ENCODE measurements at regions of chr19 and their contacts with region 1.

Region 1: GRCh38 chr19:34171877-34172660 is at the start of gene LSM14A:
- DNase-seq: peak; percentile 92 to 96 (median 94)
- ATAC-seq: peak; percentile 87 to 91
- H3K4me3 Mint-ChIP-seq: peak within 1 kb of the TSS; percentile 82 to 99 (median 97)
- H3K27ac Mint-ChIP-seq: peak within 1 kb of the TSS; percentile 90 to 100 (median 98)
- H3K4me1 Mint-ChIP-seq: peaks cover 11 to 50% (median 43%) of the 10 kb centered on the region in 4 donors
- H3K27me3 Mint-ChIP-seq: no peaks in the 10 kb centered on the region
- polyA plus RNA-seq, gene LSM14A: 163 to 193 (median 172) TPM

Region 2: GRCh38 chr19:34088303-34088702 is 83.8 kb before region 1 on chr19:
- POLR2A ChIA-PET with region 1: no interaction called
- DNase-seq: no peak
- ATAC-seq: no peak
- H3K4me3 Mint-ChIP-seq: no peak overlapping the region
- H3K27ac Mint-ChIP-seq: no peak overlapping the region
- H3K4me1 Mint-ChIP-seq: peaks cover 0 to 2% (median 0%) of the 10 kb centered on the region in 4 donors
- H3K27me3 Mint-ChIP-seq: peaks cover 8 to 31% (median 21%) of the 10 kb centered on the region in 5 donors

Region 3: DNA sequence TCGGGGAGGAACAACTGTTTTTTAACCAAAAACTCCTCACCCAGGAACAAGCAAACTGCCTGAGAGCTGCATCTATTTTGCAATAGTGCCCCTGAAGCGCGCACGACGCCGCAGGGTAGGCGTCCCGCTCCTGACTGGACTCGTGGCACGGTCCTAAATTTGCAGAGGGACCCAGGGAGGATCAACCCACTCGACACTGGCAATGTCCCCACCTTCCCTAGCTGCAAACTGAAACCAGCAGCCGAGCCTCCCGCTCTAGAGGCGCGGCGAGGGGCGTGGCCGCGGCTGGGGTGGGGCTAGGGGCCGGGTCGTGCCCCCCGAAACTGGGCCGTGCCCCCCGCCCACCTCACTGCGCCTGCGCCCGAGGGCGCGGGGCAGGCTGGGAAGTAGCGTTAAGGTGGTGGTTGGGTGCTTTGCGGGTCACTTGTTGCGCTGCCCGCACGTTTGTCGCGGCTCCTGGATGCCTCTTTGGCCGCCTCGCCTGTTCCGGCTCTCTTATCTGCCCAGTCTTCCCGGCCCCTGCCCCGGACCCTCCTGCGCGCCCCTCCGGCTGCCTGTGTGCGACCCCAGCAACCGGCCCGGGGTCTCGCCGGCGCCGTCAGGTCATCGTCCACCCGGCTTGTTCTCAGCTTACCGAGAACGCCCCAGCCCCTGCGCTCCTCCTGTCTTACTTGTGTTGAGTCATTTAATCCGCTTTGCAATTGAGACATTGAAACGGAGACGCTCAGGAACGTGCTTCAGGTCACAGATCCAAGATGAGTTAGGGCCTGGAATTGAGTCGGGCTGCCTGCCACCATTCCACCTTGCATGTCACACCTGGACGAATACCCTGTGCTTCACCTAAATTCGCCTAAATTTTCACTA is 37.6 kb before region 1 on chr19:
- POLR2A ChIA-PET with region 1: interaction called, 25 read pairs
- DNase-seq: peak; percentile 88 to 96 (median 94)
- ATAC-seq: peak; percentile 96 to 97
- H3K4me3 Mint-ChIP-seq: peak overlapping the region; percentile 85 to 97 (median 94)
- H3K27ac Mint-ChIP-seq: peak overlapping the region in 9 of 10 donors; percentile 91 to 96 (median 96)
- H3K4me1 Mint-ChIP-seq: peaks cover 0 to 12% (median 5%) of the 10 kb centered on the region in 4 donors
- H3K27me3 Mint-ChIP-seq: no peaks in the 10 kb centered on the region

Region 4: DNA sequence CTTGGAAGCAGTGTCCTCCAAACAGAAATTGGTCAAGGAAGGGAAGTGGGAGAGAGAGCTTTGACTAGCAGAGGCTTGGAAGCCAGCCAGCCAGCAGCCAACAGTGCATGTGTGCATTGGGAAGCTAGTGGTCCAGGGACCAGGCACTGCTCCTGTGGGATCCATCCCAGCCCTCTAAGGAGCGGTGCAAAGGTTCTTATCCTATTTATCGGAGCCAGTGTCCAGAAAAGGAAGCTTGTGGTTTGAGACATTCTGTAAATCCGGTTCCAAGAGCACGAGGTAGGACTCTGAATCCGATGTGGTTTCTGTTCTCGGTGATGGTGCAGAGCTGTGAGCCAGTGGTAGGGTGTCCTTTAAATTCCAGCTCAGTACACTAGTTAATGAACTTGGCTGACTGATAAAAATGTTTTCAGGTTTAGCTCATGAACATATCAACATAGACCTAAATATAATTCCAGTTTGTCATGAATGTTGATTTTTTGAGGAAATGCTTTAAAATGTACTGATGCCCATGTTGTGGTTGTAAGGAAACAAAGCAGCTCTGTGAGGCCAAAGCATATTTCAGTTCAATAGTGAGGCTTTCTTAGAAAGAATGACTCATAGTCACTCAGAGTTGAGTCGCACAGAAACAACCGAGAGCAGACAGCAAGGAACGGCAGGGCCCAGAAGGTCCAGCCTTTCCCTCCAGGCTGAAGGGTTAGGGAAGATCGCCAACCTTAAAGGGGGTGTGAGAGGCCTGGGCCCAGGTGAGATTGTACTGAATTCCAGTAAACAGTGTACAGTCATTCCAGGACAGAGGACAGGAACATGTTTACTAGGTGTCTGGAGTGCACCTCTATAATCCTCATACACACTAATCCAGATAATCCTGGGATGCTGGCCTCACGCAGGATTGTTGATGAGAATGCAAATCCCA is 60.8 kb after region 1 on chr19:
- POLR2A ChIA-PET with region 1: interaction called, 10 read pairs
- DNase-seq: no peak
- ATAC-seq: peak; percentile 29 to 46
- H3K4me3 Mint-ChIP-seq: peak overlapping the region in 2 of 10 donors; percentile 41 to 45
- H3K27ac Mint-ChIP-seq: peak overlapping the region; percentile 13 to 90 (median 76)
- H3K4me1 Mint-ChIP-seq: peaks cover 10 to 22% (median 20%) of the 10 kb centered on the region in 4 donors
- H3K27me3 Mint-ChIP-seq: no peaks in the 10 kb centered on the region

Region 5: GRCh38 chr19:34269968-34270621 is 98.0 kb after region 1 on chr19:
- POLR2A ChIA-PET with region 1: interaction called, 14 read pairs
- DNase-seq: peak; percentile 41 to 90 (median 78)
- ATAC-seq: peak; percentile 89 to 90
- H3K4me3 Mint-ChIP-seq: peak overlapping the region; percentile 68 to 90 (median 80)
- H3K27ac Mint-ChIP-seq: peak overlapping the region; percentile 86 to 99 (median 96)
- H3K4me1 Mint-ChIP-seq: peaks cover 50 to 91% (median 80%) of the 10 kb centered on the region in 4 donors
- H3K27me3 Mint-ChIP-seq: no peaks in the 10 kb centered on the region

Region 6: GRCh38 chr19:34364830-34365462 is 192.9 kb after region 1 on chr19 and contains the start of gene GPI:
- POLR2A ChIA-PET with region 1: interaction called, 12 read pairs
- DNase-seq: peak; percentile 51 to 76 (median 65)
- ATAC-seq: peak; percentile 91 to 92
- H3K4me3 Mint-ChIP-seq: peak within 1 kb of the TSS; percentile 92 to 98 (median 95)
- H3K27ac Mint-ChIP-seq: peak within 1 kb of the TSS; percentile 80 to 95 (median 93)
- H3K4me1 Mint-ChIP-seq: peaks cover 20 to 41% (median 35%) of the 10 kb centered on the region in 4 donors
- H3K27me3 Mint-ChIP-seq: no peaks in the 10 kb centered on the region
- polyA plus RNA-seq, gene GPI: 126 to 179 (median 142) TPM

Measured in naive thymus-derived CD8-positive, alpha-beta T cell (primary cell).